Posterior vena cava (tissue), 2 donors: ENCODE measurements at regions of chr4 and their contacts with region 1.

Region 1: DNA sequence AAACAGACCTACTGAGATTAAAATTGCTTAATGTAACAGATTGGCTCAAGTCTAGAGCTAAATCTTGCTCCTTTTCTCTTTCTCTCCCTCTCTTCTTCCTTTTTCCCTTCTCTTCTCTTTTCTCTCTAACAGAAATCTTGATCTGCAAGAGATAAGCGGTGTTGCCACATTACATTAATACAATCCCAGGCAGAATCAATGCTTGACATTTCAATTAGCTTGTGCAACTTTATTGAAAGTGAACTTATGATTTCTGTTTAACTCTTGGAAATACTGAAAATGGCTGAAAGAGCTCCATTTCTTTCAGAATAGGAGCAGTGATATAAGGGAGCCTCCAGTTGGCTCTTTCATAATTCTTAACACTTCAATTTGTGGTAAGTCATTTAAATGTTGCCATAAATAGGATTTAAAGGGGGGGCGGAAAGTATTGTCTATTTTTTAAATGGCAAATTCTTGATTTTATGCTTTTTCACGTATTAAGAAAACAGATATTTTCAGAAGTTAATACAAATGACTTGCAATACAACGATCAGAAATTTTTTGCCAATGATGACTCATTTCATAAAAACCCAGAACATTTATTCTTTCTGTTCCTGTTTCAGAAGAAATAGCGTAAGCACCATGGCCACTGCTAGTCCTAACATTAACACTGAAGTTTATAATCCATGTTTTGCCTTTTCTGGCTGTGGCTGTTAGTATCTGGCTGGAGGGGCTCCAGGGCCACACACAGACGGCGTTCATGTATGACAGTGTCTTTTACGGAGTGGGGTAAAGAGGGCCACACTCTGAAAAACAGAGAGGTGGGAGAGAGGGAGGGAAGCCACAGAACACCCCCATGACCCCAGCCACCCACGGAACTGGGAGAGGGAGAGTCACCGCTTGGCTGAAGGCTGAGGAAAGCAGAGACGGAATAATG is 115.7 kb upstream of the FAT1 start:
- DNase-seq: no peak

Region 2: DNA sequence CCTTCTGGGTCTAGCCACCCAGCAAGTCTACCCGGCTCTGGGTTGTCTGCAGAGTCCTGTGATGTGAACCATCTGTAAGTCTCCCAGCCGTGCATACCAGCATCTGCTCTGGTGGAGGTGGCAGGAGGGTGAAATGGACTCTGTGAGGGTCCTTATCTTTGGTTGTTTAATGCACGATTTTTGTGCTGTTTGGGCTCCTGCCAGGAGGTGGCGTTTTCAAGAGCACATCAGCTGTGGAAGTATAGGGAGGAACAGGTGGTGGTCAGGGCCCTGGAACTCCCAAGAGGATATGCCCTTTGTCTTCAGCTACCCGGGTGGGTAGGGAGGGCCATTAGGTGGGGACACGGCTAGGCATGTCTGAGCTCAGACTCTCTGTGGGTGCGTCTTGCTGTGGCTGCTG is 1089.6 kb after region 1 on chr4:
- intact Hi-C with region 1: no loop called
- DNase-seq: no peak

Region 3: GRCh38 chr4:188171551-188171950 is 1332.2 kb after region 1 on chr4:
- intact Hi-C with region 1: loop called in 1 of 2 experiments (anchors 5 kb)
- DNase-seq: no peak